Ovary (tissue), 10 donors: ENCODE measurements at regions of chr2 and their contacts with region 1.

Region 1: DNA sequence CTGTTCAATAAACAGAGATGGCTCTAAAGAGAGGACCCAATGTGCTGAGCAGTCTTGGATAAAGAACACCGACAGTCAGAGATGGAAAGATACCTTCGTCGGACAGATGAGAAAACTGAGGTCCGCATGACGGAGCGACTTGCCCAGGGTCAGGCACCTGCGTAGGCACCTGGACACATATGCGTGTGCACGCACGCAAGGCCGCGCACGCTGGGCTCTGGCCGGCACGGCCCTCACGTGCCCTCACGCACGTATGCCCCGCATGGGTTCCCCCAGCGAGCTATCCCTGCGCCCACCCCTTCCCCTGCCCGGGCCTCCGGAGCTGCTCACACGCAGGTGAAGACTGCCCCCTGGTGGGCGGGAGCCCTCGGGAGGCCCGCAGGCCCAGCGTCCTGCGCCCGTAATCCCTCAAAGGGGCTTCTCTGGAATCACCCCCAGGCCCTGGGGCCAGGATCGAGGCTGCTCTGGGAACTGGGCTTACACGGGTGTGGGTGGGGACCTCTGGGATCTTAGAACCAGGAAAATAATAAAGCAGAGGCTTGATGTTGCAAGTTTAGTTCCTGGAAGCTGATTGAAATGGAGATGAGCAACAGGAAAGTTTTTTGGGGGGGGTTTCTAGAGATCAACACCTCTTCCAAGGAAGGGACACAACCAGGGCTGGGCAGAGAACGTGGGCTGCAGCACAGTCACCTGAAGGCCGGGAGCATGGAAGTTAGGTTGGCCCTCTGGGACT is 246.3 kb downstream of the TNS1 start:
- DNase-seq: peak; percentile 82 to 92 (median 89)
- H3K4me3 ChIP-seq: peak overlapping the region; percentile 7
- H3K27ac ChIP-seq: no peak overlapping the region
- H3K4me1 ChIP-seq: no peaks in the 10 kb centered on the region
- H3K27me3 ChIP-seq: no peaks in the 10 kb centered on the region
- CTCF ChIP-seq: peak; percentile 83 to 93 (median 92)
- EP300 ChIP-seq: no peak
- POLR2A ChIP-seq: no peak

Region 2: DNA sequence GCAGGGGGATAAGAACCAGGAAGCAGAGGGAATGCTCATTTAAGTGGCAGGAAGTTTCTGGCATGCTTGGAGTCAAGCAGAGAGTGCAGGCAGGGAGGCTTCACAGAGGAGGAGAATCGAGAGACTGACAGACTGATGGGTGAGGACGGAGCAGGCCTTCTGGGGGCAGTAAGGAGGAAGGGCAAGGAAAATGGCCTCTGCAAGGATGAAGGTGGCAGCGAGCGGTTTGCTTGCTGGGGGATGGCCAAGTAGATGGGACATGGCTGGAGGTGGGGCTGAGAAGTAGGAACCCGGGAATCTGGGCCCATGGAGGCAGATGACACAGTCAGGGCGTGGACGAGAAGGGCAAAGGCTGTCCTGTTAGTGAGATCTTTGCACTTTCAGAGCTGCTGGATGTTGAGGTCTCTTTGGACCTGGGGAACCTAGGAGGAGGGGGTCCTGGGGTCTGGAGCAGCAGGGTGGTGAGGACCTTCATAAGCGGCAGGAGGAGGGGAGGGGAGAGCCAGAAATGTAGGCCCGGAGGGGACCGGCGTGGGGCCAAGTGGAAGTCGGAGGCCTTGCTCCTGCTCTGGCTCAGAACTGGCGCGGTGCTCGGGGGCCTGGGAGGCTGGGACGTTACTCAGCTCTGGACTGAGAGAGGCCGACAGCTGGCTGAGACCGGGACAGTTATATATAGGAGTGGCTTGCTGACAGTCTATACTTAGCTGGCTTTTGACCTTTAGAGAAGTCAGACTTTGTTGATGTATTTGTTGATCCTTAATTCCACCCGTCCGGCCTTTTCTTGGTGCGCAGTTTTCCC is 1077.1 kb before region 1 on chr2:
- intact Hi-C with region 1: loop called in 2 of 4 experiments (anchors 10 kb)
- DNase-seq: peak in 2 of 5 donors; percentile 44 to 54
- H3K4me3 ChIP-seq: no peak overlapping the region
- H3K27ac ChIP-seq: no peak overlapping the region
- H3K4me1 ChIP-seq: peaks cover 6% of the 10 kb centered on the region
- H3K27me3 ChIP-seq: no peaks in the 10 kb centered on the region
- CTCF ChIP-seq: no peak
- EP300 ChIP-seq: no peak
- POLR2A ChIP-seq: no peak

Region 3: DNA sequence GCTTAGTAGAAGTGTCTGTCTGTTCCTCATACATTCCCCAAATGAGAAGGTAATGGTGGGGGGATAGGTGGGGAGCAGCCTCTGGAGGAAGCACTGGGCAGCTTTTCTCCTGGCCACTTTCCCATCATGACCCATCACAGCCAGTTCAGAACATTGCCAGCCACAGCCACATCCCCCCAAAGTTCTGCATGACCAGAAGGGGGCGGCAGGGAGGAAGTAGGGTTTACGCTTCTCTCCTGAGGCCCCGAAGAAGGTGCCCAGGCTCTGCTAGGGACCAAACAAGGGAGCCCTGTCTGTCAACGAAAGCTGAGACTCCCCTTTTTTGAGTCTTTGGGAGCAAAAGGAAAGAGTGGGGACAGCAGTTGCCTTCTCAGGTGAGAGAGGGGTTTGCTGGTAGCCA is 1068.9 kb before region 1 on chr2:
- intact Hi-C with region 1: loop called in 1 of 4 experiments (anchors 10 kb)
- DNase-seq: peak in 3 of 5 donors; percentile 31 to 46 (median 42)
- H3K4me3 ChIP-seq: no peak overlapping the region
- H3K27ac ChIP-seq: peak overlapping the region in 1 of 2 donors; percentile 21
- H3K4me1 ChIP-seq: peaks cover 31% of the 10 kb centered on the region
- H3K27me3 ChIP-seq: no peaks in the 10 kb centered on the region
- CTCF ChIP-seq: peak in 1 of 3 donors; percentile 21
- EP300 ChIP-seq: no peak
- POLR2A ChIP-seq: no peak

Region 4: DNA sequence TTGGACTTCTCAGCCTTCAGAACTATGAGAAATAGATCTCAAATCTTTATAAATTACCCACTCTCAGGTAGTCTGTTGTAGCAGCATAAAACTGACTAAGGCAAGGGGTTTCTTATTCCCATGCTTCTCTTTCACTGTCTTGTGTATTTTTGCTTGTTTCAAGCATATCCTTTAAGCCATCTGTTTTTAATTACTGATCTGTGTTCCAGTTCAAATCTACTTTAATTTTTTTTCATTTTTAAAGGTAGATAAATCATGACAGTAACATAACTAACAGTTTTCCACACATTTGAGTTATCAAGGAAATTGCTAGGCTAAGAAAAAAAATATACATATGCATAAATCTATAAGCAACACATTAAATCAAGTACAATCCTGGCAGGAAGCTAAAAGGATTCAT is 578.8 kb before region 1 on chr2:
- intact Hi-C with region 1: no loop called
- DNase-seq: no peak
- H3K4me3 ChIP-seq: no peak overlapping the region
- H3K27ac ChIP-seq: no peak overlapping the region
- H3K4me1 ChIP-seq: no peaks in the 10 kb centered on the region
- H3K27me3 ChIP-seq: no peaks in the 10 kb centered on the region
- CTCF ChIP-seq: no peak
- EP300 ChIP-seq: no peak
- POLR2A ChIP-seq: no peak

Region 5: GRCh38 chr2:217943446-217944389 is 187.2 kb after region 1 on chr2:
- intact Hi-C with region 1: no loop called
- DNase-seq: peak; percentile 76 to 89 (median 82)
- H3K4me3 ChIP-seq: peak overlapping the region; percentile 50
- H3K27ac ChIP-seq: peak overlapping the region; percentile 61 to 68
- H3K4me1 ChIP-seq: peaks cover 27% of the 10 kb centered on the region
- H3K27me3 ChIP-seq: no peaks in the 10 kb centered on the region
- CTCF ChIP-seq: peak in 2 of 3 donors; percentile 40
- EP300 ChIP-seq: no peak
- POLR2A ChIP-seq: peak; percentile 37